Right ventricle myocardium inferior (tissue), 1 donor: ENCODE measurements at regions of chr5 and their contacts with region 1.

Region 1: DNA sequence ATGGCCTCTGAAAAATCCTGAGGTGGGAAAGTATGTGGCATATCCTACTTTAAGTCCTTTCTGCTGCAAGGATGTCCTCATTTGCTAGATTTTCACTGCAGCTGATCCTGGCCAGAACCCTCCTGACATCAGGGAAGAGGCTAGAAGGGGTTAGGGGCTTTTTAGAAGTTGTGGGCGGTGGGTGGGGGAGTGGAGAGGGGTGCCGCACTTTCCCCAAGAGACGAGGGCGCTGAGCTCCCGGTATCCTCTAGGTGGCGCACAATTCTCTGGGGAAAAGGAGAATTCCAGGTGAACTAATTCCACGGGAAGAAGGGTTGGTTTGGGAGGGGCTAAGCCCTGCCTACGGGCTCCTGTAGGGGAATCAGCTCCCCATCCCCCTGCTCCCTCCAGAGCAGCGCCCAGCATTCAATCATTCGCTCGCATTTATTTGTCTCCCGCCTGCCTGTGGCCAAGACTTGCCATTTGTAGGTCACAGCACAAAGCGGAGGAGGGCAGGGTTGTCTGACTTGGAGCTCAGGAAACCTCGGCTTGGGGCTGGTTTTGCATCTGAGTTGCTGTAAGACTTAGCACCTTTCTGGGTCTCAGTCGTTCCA is 42.9 kb upstream of the HAND1 start:
- DNase-seq: no peak
- ATAC-seq: no peak

Region 2: DNA sequence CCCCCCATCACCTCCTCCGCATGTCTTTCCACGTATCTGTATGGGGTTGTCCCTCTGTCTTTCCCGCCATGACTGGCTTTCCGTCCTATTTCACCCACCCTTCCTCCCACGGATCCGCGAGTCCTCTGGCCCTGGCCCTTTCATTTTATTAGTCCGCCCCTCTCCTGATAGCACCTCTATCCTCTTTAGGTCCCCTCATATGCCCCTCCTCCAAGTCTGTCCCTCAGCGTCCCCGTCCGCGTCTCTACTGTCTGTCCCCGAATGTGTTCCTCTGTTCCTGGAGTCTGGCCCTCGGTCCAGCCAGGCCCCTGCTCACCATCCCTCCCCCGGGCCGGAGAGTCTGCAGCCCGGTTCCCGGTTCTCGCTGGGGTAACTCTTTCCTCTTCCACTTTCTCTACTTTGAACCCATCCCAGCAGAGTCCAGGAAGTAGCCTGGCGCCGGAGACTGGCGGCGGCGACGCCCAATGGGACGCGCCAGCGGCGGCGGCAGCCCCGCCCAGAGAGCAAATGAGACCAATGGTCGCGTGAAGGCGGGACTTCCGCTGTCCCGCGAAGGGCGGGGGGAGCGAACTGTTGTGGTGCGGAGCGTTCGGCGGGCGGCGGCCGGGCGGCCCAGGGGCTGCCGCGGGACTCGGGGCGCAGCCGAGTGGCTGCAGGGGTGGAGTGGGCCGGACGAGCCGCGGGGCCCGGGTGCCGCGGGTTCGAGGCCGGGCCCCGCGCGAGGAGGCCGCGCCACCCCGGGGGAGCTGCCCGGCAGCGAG is 75.4 kb before region 1 on chr5 and contains the start of gene SAP30L:
- intact Hi-C with region 1: no loop called
- DNase-seq: peak; percentile 97
- ATAC-seq: peak; percentile 98
- total RNA-seq, gene SAP30L: 39.2 TPM

Region 3: DNA sequence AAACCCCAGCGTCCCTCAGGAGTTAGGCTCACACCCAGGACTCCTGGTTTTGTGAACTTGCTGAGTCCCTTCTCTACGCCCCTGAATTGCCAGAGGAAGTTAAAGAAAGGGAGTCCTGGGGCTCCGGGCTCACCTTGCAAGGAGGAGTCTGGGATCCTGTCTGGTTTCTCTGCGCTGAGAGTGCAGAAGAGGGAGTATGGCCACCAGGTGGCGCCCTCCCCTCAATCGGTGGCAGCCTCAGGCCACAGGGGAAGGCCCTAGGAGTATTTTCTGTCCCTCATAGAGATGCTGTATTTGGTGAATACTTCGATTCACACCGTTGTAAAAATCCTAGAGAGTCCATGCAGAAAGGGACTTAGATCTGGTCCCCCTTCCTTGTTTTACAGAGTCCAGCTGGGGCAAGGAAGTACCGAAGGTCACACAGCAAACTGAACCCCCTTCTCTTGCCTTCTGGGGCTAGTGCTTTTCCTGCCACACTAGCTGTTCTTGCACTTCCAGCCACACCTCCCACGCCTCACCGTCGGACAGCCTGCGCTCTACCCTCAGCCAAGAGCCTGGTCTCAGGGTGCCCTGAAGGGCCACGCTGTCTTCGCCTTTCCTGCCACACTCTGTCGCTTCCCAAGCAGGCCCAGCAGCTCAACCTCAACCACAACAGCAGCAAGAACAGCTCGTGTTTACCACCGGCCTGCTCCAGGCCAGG is 53.2 kb before region 1 on chr5:
- intact Hi-C with region 1: loop called (anchors 5 kb)
- DNase-seq: peak; percentile 90
- ATAC-seq: peak; percentile 85

Region 4: GRCh38 chr5:154478224-154478565 is 42.8 kb before region 1 on chr5 and contains the start of gene HAND1:
- intact Hi-C with region 1: no loop called
- DNase-seq: peak; percentile 76
- ATAC-seq: peak; percentile 89
- total RNA-seq, gene HAND1: 29.8 TPM

Region 5: DNA sequence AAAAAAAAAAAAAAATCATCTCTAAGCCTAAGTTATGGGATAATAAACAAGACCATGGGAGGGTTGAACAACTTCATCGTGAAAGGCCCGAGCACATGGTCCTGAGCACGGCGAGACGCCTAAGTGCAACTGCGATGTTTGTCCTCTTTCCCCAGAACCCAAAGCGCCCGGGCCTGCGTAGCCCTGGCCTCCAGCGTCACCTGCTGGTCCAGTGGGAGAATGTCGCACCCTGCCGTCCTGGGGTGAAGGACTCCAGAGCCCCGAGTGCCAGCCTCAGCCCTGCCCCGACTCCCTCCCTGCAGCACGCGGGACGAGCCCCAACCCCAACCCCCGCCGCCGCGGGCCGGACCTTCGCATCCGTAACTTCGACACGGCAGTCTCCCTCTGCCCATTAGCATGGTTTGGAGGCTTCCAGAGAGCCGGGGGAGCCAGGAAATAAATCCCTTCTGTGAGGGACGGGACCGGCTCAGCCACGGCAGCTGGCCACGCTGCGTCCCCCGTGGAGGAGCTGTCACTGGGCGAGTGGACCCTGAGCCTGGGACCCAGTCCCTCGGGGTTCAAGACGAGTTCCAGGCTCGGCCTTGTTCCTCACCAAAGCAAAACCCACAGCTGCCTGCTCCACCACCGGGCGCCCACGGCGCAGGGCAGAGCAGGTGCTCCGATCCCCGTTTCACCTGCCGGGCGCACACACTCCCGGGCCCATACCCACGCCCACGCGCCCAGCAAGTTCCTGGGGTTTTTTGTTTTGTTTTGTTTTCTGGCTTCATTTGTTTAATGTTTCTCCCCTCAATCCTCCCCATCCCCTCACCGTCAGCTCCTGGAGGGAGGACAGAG is 89.6 kb after region 1 on chr5:
- intact Hi-C with region 1: loop called (anchors 2 kb)
- DNase-seq: peak; percentile 75
- ATAC-seq: peak; percentile 93